ENCODE measurements at regions of chr6 and their contacts with region 1.

Region 1: GRCh38 chr6:70538376-70538775 is 28.4 kb upstream of the SDHAF4 start:
- DNase-seq: peak; percentile 54
- CTCF ChIP-seq: no peak

Region 2: DNA sequence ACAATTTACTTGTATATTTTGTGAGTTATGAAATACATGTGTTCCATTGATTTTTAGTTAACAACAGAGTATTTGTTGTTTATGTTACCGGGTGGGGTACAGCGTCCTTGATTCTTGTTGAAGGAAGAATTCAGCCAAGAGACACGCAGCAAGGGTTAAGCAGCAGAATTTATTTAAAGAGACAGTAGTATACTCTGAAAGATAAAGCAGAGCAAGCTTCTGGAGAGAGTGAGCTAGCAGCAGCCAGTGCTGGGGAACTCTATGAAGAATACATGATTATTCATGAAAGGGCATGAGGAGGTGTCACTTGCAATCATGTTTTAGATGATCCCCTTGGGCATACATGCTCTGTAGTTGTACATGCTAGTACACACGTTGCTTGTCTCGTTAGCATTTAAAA is 49.0 kb before region 1 on chr6:
- in situ Hi-C with region 1: no loop called
- DNase-seq: no peak
- CTCF ChIP-seq: no peak

Region 3: GRCh38 chr6:70694371-70694770 is 156.0 kb after region 1 on chr6:
- in situ Hi-C with region 1: loop called (anchors 10 kb)
- DNase-seq: no peak
- CTCF ChIP-seq: no peak

Measured in GM13976 (cell line).